Activated CD4-positive, alpha-beta memory T cell treated with anti-CD3 and anti-CD28 coated beads for 36 hours (primary cell): ENCODE measurements at regions of chr18 and their contacts with region 1.

Region 1: GRCh38 chr18:79068937-79069791 is at the start of gene ATP9B:
- DNase-seq: peak; percentile 99
- H3K4me3 Mint-ChIP-seq: peak within 1 kb of the TSS; percentile 84
- H3K27ac Mint-ChIP-seq: peak within 1 kb of the TSS; percentile 92
- H3K4me1 Mint-ChIP-seq: peaks cover 35% of the 10 kb centered on the region
- H3K27me3 Mint-ChIP-seq: peaks cover 8% of the 10 kb centered on the region
- total RNA-seq, gene ATP9B: 15.9 to 16.6 TPM

Region 2: DNA sequence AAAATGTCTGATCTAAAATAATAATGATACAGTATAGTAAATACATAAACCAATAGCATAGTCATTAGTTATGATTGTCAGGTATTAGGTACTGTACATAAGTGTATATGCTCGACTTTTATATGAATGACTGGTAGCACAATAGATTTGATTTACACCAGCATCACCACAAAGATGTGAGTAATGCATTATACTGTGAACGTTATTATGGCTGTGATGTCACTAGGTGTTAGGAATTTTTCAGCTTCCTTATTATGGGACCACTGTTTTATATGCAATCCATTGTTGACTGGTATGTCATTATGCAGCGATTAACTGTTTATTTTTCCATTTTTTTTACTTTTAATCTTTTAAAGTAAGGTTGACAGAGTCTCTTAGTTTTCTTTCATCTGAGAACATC is 23.7 kb after region 1 on chr18:
- CTCF ChIA-PET with region 1: no interaction called
- POLR2A ChIA-PET with region 1: no interaction called
- intact Hi-C with region 1: no loop called
- DNase-seq: no peak
- H3K4me3 Mint-ChIP-seq: no peak overlapping the region
- H3K27ac Mint-ChIP-seq: no peak overlapping the region
- H3K4me1 Mint-ChIP-seq: peaks cover 37% of the 10 kb centered on the region
- H3K27me3 Mint-ChIP-seq: no peaks in the 10 kb centered on the region

Region 3: GRCh38 chr18:79156327-79156726 is 87.2 kb after region 1 on chr18:
- CTCF ChIA-PET with region 1: no interaction called
- POLR2A ChIA-PET with region 1: no interaction called
- intact Hi-C with region 1: loop called (anchors 2 kb)
- DNase-seq: no peak
- H3K4me3 Mint-ChIP-seq: no peak overlapping the region
- H3K27ac Mint-ChIP-seq: peak overlapping the region; percentile 14
- H3K4me1 Mint-ChIP-seq: peaks cover 9% of the 10 kb centered on the region
- H3K27me3 Mint-ChIP-seq: no peaks in the 10 kb centered on the region

Region 4: DNA sequence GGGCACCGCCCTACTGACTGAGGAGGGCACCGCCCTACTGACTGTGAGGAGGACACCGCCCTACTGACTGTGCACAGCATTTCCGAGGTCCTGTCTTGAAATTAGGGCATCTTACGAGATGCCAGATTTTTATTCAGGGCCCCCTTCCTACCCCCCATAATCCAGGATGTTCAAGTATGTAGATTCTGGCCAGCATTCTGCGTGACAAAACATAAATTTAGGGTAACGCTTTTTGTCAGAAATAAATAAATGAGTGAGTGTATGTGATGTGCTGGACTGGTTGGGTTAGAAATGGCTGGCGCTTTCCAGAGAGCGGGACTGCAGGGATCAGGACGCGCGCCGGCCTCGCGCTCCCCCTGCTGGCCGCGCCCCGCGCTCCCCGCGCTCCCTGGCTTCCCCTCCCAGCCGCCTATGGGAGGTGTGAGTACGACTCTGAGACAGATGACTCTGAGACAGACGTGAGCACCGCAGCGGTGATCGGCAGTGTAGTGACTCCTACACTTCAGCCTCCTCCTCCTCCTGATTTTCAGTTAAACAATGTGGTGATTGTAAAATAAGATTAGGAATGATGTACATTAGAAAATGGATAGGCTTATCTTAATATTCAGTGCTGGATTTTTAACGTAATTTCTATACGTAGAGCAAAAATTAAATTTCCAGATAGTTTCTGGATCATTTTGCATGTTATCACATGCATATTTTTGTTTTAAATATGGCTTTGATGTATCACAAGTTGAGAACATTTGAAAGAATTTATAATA is 177.4 kb after region 1 on chr18:
- CTCF ChIA-PET with region 1: no interaction called
- POLR2A ChIA-PET with region 1: no interaction called
- intact Hi-C with region 1: loop called (anchors 1 kb)
- DNase-seq: peak; percentile 89
- H3K4me3 Mint-ChIP-seq: peak overlapping the region; percentile 65
- H3K27ac Mint-ChIP-seq: peak overlapping the region; percentile 60
- H3K4me1 Mint-ChIP-seq: peaks cover 12% of the 10 kb centered on the region
- H3K27me3 Mint-ChIP-seq: no peaks in the 10 kb centered on the region

Region 5: GRCh38 chr18:79400091-79400590 is 331.0 kb after region 1 on chr18:
- CTCF ChIA-PET with region 1: no interaction called
- POLR2A ChIA-PET with region 1: no interaction called
- intact Hi-C with region 1: loop called (anchors 10 kb)
- DNase-seq: peak; percentile 78
- H3K4me3 Mint-ChIP-seq: peak overlapping the region; percentile 41
- H3K27ac Mint-ChIP-seq: no peak overlapping the region
- H3K4me1 Mint-ChIP-seq: peaks cover 50% of the 10 kb centered on the region
- H3K27me3 Mint-ChIP-seq: no peaks in the 10 kb centered on the region

Region 6: GRCh38 chr18:79528846-79529245 is 459.7 kb after region 1 on chr18:
- CTCF ChIA-PET with region 1: no interaction called
- POLR2A ChIA-PET with region 1: no interaction called
- intact Hi-C with region 1: loop called (anchors 10 kb)
- DNase-seq: peak; percentile 81
- H3K4me3 Mint-ChIP-seq: no peak overlapping the region
- H3K27ac Mint-ChIP-seq: no peak overlapping the region
- H3K4me1 Mint-ChIP-seq: peaks cover 15% of the 10 kb centered on the region
- H3K27me3 Mint-ChIP-seq: no peaks in the 10 kb centered on the region